Esophagus muscularis mucosa (tissue), 4 donors: ENCODE measurements at regions of chr22 and their contacts with region 1.

Region 1: DNA sequence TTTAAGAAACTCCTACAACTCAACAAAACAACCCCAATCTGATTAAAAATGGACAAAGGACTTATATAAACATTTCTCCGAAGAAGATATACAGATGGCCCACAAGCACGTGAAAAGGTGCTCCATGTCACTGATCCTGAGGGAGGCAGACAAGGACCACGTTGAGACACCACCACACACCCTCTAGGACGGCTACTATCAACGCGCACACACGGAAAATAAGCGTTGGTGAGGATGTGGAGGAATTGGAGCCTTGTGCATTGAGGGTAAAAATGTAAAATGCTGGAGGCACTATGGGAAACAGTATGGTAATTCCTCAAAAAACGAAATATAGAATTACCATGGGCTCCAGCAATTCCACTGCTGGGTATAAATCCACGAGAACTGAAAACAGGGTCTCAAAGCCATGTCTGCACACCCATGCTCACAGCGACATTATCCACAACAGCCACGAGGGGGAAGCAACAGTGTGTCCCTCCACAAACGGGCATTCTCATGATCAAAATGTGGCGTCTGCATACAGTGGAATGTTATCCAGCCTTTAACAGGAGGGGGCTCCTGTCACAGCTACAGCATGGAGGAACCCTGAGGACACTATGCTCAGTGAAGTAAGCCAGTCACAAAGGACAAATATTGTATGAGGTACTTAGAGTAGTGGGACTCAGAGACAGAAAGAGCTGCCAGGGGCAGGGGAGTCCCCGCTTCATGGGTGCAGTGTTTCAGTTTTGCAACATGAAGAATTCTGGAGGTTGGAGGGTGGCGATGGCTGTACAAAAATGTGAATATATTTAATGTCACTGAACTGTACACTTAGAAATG is 22.5 kb downstream of the YPEL1 start:
- DNase-seq: no peak
- H3K4me3 ChIP-seq: peak overlapping the region; percentile 4 to 29 (median 18)
- H3K27ac ChIP-seq: peak overlapping the region in 1 of 4 donors; percentile 27
- H3K4me1 ChIP-seq: peaks cover 5 to 15% (median 10%) of the 10 kb centered on the region in 4 donors
- H3K27me3 ChIP-seq: no peaks in the 10 kb centered on the region
- CTCF ChIP-seq: peak; percentile 77 to 84 (median 80)
- EP300 ChIP-seq: no peak
- POLR2A ChIP-seq: no peak

Region 2: DNA sequence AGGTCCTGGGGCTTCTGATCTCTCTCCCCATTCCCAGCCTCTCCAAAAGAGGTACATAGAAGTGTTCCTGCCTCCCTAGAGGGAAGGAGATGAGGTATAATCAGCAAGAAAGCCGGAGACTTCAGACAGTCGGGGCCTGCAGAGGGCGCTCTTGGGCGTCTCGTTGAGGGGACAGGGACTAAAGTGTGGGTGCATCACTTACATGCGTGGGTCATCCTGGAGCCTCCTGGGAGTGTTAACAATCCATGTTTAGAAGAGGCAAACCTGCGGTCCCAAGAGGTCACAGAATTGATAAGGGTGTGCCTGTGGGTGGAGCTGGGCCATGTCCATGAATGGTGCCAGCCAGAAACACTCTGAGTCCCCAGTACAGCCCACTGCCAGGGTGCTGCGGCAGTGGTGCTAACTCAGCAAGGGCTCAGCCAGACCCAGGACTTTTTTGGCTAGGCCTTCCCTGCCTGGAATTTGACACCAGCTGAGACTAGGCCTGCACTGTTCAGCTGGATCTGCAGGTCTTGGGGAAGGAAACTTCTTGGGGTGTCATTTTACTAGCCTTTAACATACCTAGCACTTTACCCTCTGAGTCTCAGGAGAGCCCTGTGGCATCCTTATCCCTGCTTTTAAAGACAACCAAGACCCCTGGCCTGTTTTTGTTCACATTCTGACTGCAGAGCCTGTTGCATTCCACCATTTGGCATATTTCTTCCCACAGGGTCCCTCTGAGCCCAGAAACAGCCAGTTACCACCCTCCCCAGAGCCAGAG is 88.8 kb before region 1 on chr22:
- intact Hi-C with region 1: no loop called
- DNase-seq: no peak
- H3K4me3 ChIP-seq: no peak overlapping the region
- H3K27ac ChIP-seq: peak overlapping the region in 1 of 4 donors; percentile 18
- H3K4me1 ChIP-seq: peaks cover 34 to 65% (median 53%) of the 10 kb centered on the region in 4 donors
- H3K27me3 ChIP-seq: no peaks in the 10 kb centered on the region
- CTCF ChIP-seq: peak in 1 of 3 experiments; percentile 23
- EP300 ChIP-seq: no peak
- POLR2A ChIP-seq: no peak

Region 3: GRCh38 chr22:21938071-21938822 is 225.1 kb after region 1 on chr22:
- intact Hi-C with region 1: loop called (anchors 5 kb)
- DNase-seq: peak; percentile 98
- H3K4me3 ChIP-seq: peak overlapping the region; percentile 61 to 67 (median 66)
- H3K27ac ChIP-seq: peak overlapping the region; percentile 92 to 98 (median 94)
- H3K4me1 ChIP-seq: peaks cover 71 to 94% (median 79%) of the 10 kb centered on the region in 4 donors
- H3K27me3 ChIP-seq: no peaks in the 10 kb centered on the region
- CTCF ChIP-seq: peak; percentile 88 to 99 (median 99)
- EP300 ChIP-seq: no peak
- POLR2A ChIP-seq: no peak

Region 4: GRCh38 chr22:22058633-22059290 is 345.7 kb after region 1 on chr22:
- intact Hi-C with region 1: no loop called
- DNase-seq: peak; percentile 55
- H3K4me3 ChIP-seq: no peak overlapping the region
- H3K27ac ChIP-seq: no peak overlapping the region
- H3K4me1 ChIP-seq: peaks cover 3 to 16% (median 8%) of the 10 kb centered on the region in 4 donors
- H3K27me3 ChIP-seq: peaks cover 0 to 37% (median 0%) of the 10 kb centered on the region in 4 donors
- CTCF ChIP-seq: no peak
- EP300 ChIP-seq: no peak
- POLR2A ChIP-seq: no peak